ENCODE measurements at regions of chr7 and their contacts with region 1.

Region 1: DNA sequence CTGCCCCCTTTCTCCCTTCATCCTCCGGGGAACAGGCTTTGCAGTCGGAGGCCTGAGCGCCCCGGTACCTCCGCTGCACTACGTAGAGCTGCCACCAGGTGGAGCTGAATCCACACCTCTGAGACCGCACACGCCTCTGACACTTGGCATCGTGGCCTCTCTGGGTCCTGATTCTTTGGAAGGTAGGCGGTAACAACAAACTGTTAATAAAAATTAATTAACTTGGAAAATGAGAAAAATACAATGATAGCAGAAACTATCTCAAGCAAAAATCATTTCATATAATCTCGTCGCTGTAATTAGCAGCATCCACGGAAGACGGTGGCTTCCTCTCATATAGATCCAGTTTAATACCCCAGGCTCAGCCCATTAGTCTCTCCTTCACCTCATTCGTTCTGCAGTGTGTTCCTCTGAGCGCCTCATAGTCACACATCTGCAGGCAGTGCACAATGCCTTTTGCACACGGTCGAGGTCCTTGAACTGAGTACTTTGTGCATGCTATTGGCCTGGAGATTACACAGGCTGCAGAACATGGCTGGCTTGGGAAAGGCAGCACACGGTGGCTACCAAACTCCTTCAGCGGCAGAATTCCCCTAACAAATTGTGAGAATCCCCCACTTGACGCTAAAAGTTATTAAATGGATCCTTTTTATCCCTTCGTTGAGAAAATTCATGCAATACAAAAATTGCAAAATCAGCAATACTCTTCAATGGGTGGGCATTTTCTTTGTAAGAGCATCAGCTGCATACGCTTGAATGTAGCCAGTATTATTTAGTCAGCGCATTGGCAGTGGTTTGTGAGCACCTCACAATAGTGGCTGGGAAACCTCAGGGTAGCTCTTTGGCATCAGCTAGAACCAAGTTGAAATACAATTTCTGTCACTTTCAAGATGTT is 18.7 kb downstream of the OR9A2 start:
- DNase-seq: peak; percentile 46
- ATAC-seq: peak; percentile 95
- H3K4me3 ChIP-seq: no peak overlapping the region
- H3K27ac ChIP-seq: no peak overlapping the region
- H3K4me1 ChIP-seq: peaks cover 0 to 1% of the 10 kb centered on the region in 2 experiments; a peak in 1 of 4 replicates
- H3K27me3 ChIP-seq: no peaks in the 10 kb centered on the region
- CTCF ChIP-seq: peak; percentile 91 to 99 (median 91)
- POLR2A ChIP-seq: no peak
- RAD21 ChIP-seq: peak; percentile 98

Region 2: DNA sequence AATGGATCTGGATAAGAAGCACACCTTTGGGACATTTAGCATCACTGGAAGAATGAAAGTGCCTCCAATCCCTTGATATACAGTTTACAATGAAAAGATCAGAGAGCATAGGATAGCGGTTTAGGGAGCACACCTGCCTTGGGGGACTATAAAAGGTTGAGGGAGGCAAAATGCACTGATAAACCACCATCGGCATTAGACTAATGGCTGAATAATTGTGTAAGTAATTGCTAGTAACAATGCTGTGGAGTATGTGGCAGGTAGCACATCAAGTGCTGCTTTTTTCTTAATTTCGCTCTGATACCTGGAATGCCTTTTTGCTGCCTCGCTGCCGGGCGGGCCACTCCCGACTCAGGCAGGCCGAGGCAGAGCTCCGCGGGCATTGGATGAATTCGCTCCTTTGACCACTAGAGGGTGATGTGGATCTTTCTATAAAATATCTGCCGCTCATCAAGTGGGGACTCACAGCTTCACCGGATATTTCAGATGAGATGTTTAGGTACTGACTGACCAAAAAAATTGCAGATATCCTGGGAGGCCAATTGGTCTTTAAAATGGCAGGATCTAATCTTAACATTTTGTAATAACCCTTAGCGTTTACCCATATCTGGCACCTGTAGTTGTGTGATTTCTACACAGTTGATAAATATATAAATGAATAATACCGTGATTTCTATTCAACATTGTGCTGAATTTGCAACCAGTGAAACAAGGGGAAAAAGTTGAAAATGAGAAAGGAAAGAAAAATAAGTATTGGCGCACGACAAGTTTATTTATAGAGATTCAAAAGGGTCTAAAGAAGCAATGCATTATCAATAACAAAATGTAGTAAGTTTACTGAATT is 375.7 kb before region 1 on chr7:
- CTCF ChIA-PET with region 1: interaction called, 11 read pairs
- POLR2A ChIA-PET with region 1: no interaction called
- RAD21 ChIA-PET with region 1: no interaction called
- intact Hi-C with region 1: no loop called
- DNase-seq: peak; percentile 63
- ATAC-seq: peak; percentile 98
- H3K4me3 ChIP-seq: no peak overlapping the region
- H3K27ac ChIP-seq: no peak overlapping the region
- H3K4me1 ChIP-seq: peaks cover 0 to 7% of the 10 kb centered on the region in 2 experiments; a peak in 1 of 4 replicates
- H3K27me3 ChIP-seq: peaks cover 6% of the 10 kb centered on the region; the same call in 1 of the 2 replicates
- CTCF ChIP-seq: peak; percentile 71 to 93 (median 81)
- POLR2A ChIP-seq: no peak
- RAD21 ChIP-seq: peak; percentile 82

Region 3: DNA sequence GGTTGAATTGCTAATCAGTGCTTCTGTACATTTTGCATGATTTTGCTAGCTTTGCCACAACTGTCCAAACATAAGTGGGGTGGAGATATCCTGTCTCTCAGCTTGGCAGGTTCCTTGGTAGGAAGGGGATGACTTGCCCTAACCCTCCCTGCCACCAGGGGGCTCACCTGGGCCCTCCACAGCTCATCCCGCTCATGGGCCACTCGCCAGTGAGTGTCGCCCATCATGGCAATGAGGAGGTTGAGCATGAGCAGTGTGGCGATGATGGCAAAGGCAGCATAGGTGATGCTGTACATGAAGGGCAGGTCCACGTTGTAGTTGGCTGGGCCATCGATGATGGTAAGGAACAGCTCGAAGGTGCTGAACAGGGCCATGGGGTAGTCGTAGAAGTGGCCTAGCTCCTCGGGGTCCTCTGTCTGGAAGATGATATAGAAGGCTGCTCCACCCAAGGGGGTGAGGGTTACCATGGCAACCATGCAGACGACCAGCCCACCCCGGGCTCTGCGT is 134.9 kb before region 1 on chr7:
- CTCF ChIA-PET with region 1: interaction called, 22 read pairs
- POLR2A ChIA-PET with region 1: no interaction called
- RAD21 ChIA-PET with region 1: interaction called in 1 of 2 experiments, 3 read pairs
- intact Hi-C with region 1: loop called (anchors 2 kb)
- DNase-seq: peak; percentile 28
- ATAC-seq: peak; percentile 94
- H3K4me3 ChIP-seq: no peak overlapping the region
- H3K27ac ChIP-seq: no peak overlapping the region
- H3K4me1 ChIP-seq: no peaks in the 10 kb centered on the region
- H3K27me3 ChIP-seq: no peaks in the 10 kb centered on the region
- CTCF ChIP-seq: peak; percentile 76 to 93 (median 90)
- POLR2A ChIP-seq: no peak
- RAD21 ChIP-seq: peak; percentile 40; the same call in 1 of the 2 replicates

Region 4: DNA sequence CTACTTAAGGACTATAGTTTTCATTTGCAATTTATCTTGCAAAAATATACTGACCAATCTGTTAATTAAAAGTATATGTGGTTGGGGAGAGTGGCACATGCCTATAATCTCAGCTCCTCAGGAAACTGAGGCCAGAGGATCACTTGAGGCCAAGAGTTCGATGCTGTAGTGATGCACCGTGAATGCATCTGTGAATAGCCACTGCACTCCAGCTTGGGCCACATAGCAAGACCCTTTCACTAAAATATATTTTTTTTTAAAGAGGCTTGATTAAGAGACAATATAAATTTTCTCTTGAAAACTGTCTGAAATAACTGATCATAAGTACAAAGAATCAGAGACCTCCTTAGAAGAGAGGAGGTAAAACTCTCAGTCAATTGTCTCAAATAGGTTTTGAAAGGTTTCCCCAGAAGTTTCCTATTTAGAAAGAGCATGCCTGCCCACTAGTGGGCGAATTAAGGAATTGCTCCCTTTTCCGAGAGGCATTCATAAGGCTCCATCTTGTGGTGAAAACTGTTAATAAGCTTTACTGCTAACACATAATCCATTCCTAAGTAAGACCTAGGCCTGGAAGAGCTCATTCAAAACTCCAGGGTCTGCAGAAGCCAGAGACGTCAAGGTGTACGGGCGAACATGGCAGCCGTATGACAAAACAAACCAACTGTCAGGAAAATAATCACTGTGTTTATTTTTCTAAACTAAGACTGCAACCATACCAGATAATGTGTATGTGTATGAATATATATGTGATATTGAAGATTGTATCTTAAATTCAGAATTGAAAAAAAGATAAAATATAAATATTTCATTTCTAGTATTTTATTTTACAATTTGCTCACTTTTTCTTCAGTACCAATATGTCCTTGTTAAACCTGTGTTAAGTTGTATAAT is 206.8 kb after region 1 on chr7:
- CTCF ChIA-PET with region 1: interaction called, 331 read pairs
- POLR2A ChIA-PET with region 1: interaction called, 3 read pairs
- RAD21 ChIA-PET with region 1: interaction called, 9 to 12 read pairs
- intact Hi-C with region 1: loop called (anchors 1 kb)
- DNase-seq: peak; percentile 87
- ATAC-seq: peak; percentile 98
- H3K4me3 ChIP-seq: no peak overlapping the region
- H3K27ac ChIP-seq: no peak overlapping the region
- H3K4me1 ChIP-seq: no peaks in the 10 kb centered on the region
- H3K27me3 ChIP-seq: no peaks in the 10 kb centered on the region
- CTCF ChIP-seq: peak; percentile 95 to 100 (median 100)
- POLR2A ChIP-seq: no peak
- RAD21 ChIP-seq: peak; percentile 100

Region 5: GRCh38 chr7:143269251-143269650 is 261.0 kb after region 1 on chr7:
- CTCF ChIA-PET with region 1: no interaction called
- POLR2A ChIA-PET with region 1: no interaction called
- RAD21 ChIA-PET with region 1: no interaction called
- intact Hi-C with region 1: no loop called
- DNase-seq: no peak
- ATAC-seq: no peak
- H3K4me3 ChIP-seq: no peak overlapping the region
- H3K27ac ChIP-seq: no peak overlapping the region
- H3K4me1 ChIP-seq: peaks cover 0 to 4% of the 10 kb centered on the region in 2 experiments; a peak in 1 of 4 replicates
- H3K27me3 ChIP-seq: no peaks in the 10 kb centered on the region
- CTCF ChIP-seq: no peak
- POLR2A ChIP-seq: no peak
- RAD21 ChIP-seq: no peak

Region 6: DNA sequence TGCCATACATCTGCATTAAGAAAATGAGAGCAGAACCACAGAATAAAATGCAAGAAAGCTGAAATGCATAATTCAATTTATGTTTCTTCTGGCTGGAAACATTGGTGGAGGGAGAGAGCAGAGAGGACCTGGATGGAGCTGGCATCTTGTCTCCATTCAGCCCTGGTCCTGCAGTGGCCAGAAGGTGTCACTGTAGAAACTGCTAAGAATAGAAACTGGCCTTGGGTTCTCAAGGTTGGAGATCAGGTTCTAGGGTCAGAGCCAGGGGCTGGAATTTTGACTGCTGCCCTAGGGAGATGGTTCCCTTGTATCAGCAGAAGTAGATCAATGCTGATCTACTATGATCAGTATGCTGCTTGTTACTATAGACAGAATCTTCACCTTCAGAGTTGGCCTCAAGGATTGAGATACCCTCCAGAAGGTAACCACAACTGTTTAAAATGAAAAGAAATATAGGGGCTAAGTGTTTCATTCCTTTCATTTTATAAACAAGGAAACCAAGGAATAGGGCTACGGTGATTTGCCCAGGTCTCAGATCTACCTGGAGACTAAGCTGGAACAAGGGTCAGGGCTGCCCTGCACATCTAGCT is 482.6 kb after region 1 on chr7:
- CTCF ChIA-PET with region 1: no interaction called
- POLR2A ChIA-PET with region 1: no interaction called
- RAD21 ChIA-PET with region 1: no interaction called
- intact Hi-C with region 1: loop called (anchors 10 kb)
- DNase-seq: no peak
- ATAC-seq: peak; percentile 82
- H3K4me3 ChIP-seq: no peak overlapping the region
- H3K27ac ChIP-seq: no peak overlapping the region
- H3K4me1 ChIP-seq: peaks cover 5 to 28% of the 10 kb centered on the region in 2 experiments; a peak in 3 of 4 replicates
- H3K27me3 ChIP-seq: no peaks in the 10 kb centered on the region
- CTCF ChIP-seq: peak; percentile 51 to 70 (median 65); a peak in 5 of 6 replicates
- POLR2A ChIP-seq: no peak
- RAD21 ChIP-seq: peak; percentile 60

Measured in HCT116 (cell line).